Heart right ventricle (tissue), 16 donors: ENCODE measurements at regions of chr2 and their contacts with region 1.

Region 1: GRCh38 chr2:70142590-70143313 is 48.1 kb downstream of the C2orf42 start:
- DNase-seq: peak; percentile 99 to 100
- ATAC-seq: peak; percentile 88 to 96 (median 92)
- H3K4me3 ChIP-seq: peak overlapping the region; percentile 19 to 75 (median 67)
- H3K27ac ChIP-seq: peak overlapping the region; percentile 93 to 100 (median 100)
- H3K4me1 ChIP-seq: peaks cover 6 to 37% (median 20%) of the 10 kb centered on the region in 9 donors
- H3K27me3 ChIP-seq: no peaks in the 10 kb centered on the region
- CTCF ChIP-seq: peak; percentile 80 to 99 (median 97)

Region 2: GRCh38 chr2:69914170-69914960 is 228.4 kb before region 1 on chr2:
- intact Hi-C with region 1: loop called (anchors 1 to 10 kb)
- DNase-seq: peak; percentile 97 to 100
- ATAC-seq: peak; percentile 94 to 98 (median 96)
- H3K4me3 ChIP-seq: peak overlapping the region; percentile 45 to 95 (median 76)
- H3K27ac ChIP-seq: peak overlapping the region; percentile 80 to 97 (median 96)
- H3K4me1 ChIP-seq: peaks cover 0 to 59% (median 34%) of the 10 kb centered on the region in 9 donors
- H3K27me3 ChIP-seq: no peaks in the 10 kb centered on the region
- CTCF ChIP-seq: peak in 5 of 9 donors; percentile 29 to 53 (median 36)

Region 3: GRCh38 chr2:70086838-70087701 is 55.7 kb before region 1 on chr2 and contains the start of gene PCBP1:
- intact Hi-C with region 1: loop called (anchors 1 to 5 kb)
- DNase-seq: peak; percentile 97 to 98
- ATAC-seq: peak; percentile 85 to 93 (median 91)
- H3K4me3 ChIP-seq: peak within 1 kb of the TSS; percentile 53 to 98 (median 86)
- H3K27ac ChIP-seq: peak within 1 kb of the TSS; percentile 99 to 100 (median 100)
- H3K4me1 ChIP-seq: peaks cover 4 to 60% (median 46%) of the 10 kb centered on the region in 9 donors
- H3K27me3 ChIP-seq: no peaks in the 10 kb centered on the region
- CTCF ChIP-seq: no peak
- total RNA-seq, gene PCBP1: 197 to 275 (median 219) TPM

Region 4: GRCh38 chr2:70094978-70095719 is 47.6 kb before region 1 on chr2:
- intact Hi-C with region 1: loop called in 1 of 10 experiments (anchors 2 kb)
- DNase-seq: peak in 1 of 2 donors; percentile 70
- ATAC-seq: peak; percentile 75 to 89 (median 83)
- H3K4me3 ChIP-seq: peak overlapping the region in 4 of 10 donors; percentile 1 to 24 (median 15)
- H3K27ac ChIP-seq: peak overlapping the region; percentile 10 to 96 (median 84)
- H3K4me1 ChIP-seq: peaks cover 0 to 51% (median 22%) of the 10 kb centered on the region in 9 donors
- H3K27me3 ChIP-seq: no peaks in the 10 kb centered on the region
- CTCF ChIP-seq: no peak

Region 5: DNA sequence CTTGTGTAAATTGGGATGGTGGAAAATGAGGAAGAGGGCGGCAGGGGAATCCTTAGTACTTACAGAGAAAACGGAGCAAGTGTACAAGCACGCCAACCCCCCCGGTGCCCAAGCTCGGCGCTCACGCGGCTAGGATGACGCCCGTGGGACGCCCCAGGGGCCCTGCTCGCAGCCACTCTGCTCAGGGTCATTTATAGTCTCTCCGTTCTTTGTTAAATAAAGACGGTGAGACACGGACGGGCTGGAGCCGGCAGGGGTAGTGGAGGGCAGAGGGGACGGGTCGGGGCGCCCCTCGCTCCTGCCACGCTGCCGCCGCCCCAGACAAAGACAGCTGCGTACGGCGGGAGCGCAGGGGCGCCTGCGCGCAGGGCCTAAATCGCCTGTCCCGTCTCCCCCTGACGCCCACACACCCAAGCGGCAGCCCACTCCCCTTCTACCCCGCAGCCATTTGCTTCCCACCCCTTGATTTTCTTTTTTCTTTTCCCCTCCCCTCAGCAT is 17.7 kb before region 1 on chr2:
- intact Hi-C with region 1: loop called in 1 of 10 experiments (anchors 1 kb)
- DNase-seq: peak; percentile 66 to 70
- ATAC-seq: peak; percentile 41 to 74 (median 66)
- H3K4me3 ChIP-seq: peak overlapping the region; percentile 33 to 82 (median 66)
- H3K27ac ChIP-seq: peak overlapping the region; percentile 92 to 100 (median 99)
- H3K4me1 ChIP-seq: peaks cover 9 to 64% (median 39%) of the 10 kb centered on the region in 9 donors
- H3K27me3 ChIP-seq: no peaks in the 10 kb centered on the region
- CTCF ChIP-seq: no peak

Region 6: GRCh38 chr2:70248181-70248847 is 105.6 kb after region 1 on chr2 and contains the start of gene TIA1:
- intact Hi-C with region 1: loop called in 1 of 10 experiments (anchors 2 kb)
- DNase-seq: peak; percentile 98 to 99
- ATAC-seq: peak; percentile 98 to 99 (median 98)
- H3K4me3 ChIP-seq: peak within 1 kb of the TSS; percentile 67 to 93 (median 74)
- H3K27ac ChIP-seq: peak within 1 kb of the TSS; percentile 88 to 99 (median 94)
- H3K4me1 ChIP-seq: peaks cover 14 to 44% (median 38%) of the 10 kb centered on the region in 9 donors
- H3K27me3 ChIP-seq: no peaks in the 10 kb centered on the region
- CTCF ChIP-seq: no peak
- total RNA-seq, gene TIA1: 33.8 to 58.1 (median 43.2) TPM